ENCODE measurements at regions of chr13 and their contacts with region 1.

Region 1: GRCh38 chr13:113816946-113817859 is 46.7 kb downstream of the GAS6 start:
- DNase-seq: peak; percentile 69 to 90 (median 85)
- ATAC-seq: peak; percentile 91
- H3K4me3 ChIP-seq: no peak overlapping the region
- H3K4me3 Mint-ChIP-seq: peak overlapping the region; percentile 75 to 100 (median 86)
- H3K27ac ChIP-seq: no peak overlapping the region
- H3K27ac Mint-ChIP-seq: peak overlapping the region in 8 of 9 donors; percentile 40 to 95 (median 76)
- H3K4me1 ChIP-seq: peaks cover 10 to 11% of the 10 kb centered on the region in 2 donors
- H3K4me1 Mint-ChIP-seq: peaks cover 13 to 30% (median 23%) of the 10 kb centered on the region in 7 donors
- H3K27me3 ChIP-seq: no peaks in the 10 kb centered on the region
- H3K27me3 Mint-ChIP-seq: peaks cover 0 to 3% (median 0%) of the 10 kb centered on the region in 5 donors

Region 2: DNA sequence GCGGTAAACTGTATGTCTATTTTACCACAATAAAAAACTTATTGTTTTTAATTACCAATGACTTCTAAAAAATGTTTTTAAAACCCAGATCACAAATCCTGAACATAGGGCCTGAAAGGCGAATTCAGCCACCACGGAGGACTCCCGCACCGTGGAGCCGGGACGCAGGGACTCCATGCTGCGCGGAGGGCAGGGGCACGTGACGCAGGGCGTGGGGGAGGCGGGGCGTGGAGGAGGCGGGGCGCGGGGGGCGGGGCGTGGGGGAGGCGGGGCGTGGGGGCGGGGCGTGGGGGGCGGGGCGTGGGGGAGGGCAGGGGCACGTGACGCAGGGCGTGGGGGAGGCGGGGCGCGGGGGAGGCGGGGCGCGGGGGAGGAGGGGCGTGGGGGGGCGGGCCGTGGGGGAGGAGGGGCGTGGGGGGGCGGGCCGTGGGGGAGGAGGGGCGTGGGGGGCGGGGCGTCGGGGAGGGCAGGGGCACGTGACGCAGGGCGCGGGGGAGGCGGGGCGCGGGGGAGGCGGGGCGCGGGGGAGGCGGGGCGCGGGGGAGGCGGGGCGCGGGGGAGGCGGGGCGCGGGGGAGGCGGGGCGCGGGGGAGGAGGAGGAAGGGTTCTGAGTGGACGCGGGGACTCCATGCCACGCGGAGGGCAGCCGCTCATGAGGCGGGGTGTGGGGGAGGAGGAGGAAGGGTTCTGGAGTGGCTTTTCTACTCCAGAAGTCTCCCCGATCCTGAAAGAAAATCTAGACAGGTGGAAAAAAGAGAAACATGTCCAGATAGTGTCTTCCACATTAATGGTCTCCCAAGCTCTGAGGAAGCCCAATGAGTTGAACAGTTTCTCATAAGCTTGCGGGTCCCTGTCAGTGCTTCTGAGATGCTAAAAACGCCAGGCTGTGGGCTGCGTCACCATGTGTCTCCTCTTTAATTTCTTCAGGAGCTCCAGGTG is 663.1 kb before region 1 on chr13:
- CTCF ChIA-PET with region 1: no interaction called
- POLR2A ChIA-PET with region 1: no interaction called
- intact Hi-C with region 1: loop called in 1 of 2 experiments (anchors 5 kb)
- DNase-seq: peak; percentile 55 to 76 (median 70)
- ATAC-seq: peak; percentile 89
- H3K4me3 ChIP-seq: peak overlapping the region; percentile 82
- H3K4me3 Mint-ChIP-seq: peak overlapping the region; percentile 78 to 99 (median 86)
- H3K27ac ChIP-seq: peak overlapping the region; percentile 68
- H3K27ac Mint-ChIP-seq: peak overlapping the region in 8 of 9 donors; percentile 84 to 96 (median 88)
- H3K4me1 ChIP-seq: peaks cover 15 to 16% of the 10 kb centered on the region in 2 donors
- H3K4me1 Mint-ChIP-seq: peaks cover 9 to 26% (median 21%) of the 10 kb centered on the region in 7 donors
- H3K27me3 ChIP-seq: no peaks in the 10 kb centered on the region
- H3K27me3 Mint-ChIP-seq: peaks cover 0 to 27% (median 7%) of the 10 kb centered on the region in 5 donors

Region 3: GRCh38 chr13:113832204-113832603 is 15.0 kb after region 1 on chr13:
- CTCF ChIA-PET with region 1: no interaction called
- POLR2A ChIA-PET with region 1: no interaction called
- intact Hi-C with region 1: no loop called
- DNase-seq: no peak
- ATAC-seq: no peak
- H3K4me3 ChIP-seq: no peak overlapping the region
- H3K4me3 Mint-ChIP-seq: no peak overlapping the region
- H3K27ac ChIP-seq: no peak overlapping the region
- H3K27ac Mint-ChIP-seq: no peak overlapping the region
- H3K4me1 ChIP-seq: no peaks in the 10 kb centered on the region
- H3K4me1 Mint-ChIP-seq: peaks cover 0 to 7% (median 0%) of the 10 kb centered on the region in 7 donors
- H3K27me3 ChIP-seq: no peaks in the 10 kb centered on the region
- H3K27me3 Mint-ChIP-seq: no peaks in the 10 kb centered on the region

Region 4: GRCh38 chr13:113904411-113904810 is 87.2 kb after region 1 on chr13:
- CTCF ChIA-PET with region 1: no interaction called
- POLR2A ChIA-PET with region 1: no interaction called
- intact Hi-C with region 1: loop called (anchors 2 kb)
- DNase-seq: peak in 3 of 9 donors; percentile 12 to 23 (median 20)
- ATAC-seq: no peak
- H3K4me3 ChIP-seq: no peak overlapping the region
- H3K4me3 Mint-ChIP-seq: no peak overlapping the region
- H3K27ac ChIP-seq: no peak overlapping the region
- H3K27ac Mint-ChIP-seq: no peak overlapping the region
- H3K4me1 ChIP-seq: no peaks in the 10 kb centered on the region
- H3K4me1 Mint-ChIP-seq: peaks cover 0 to 15% (median 7%) of the 10 kb centered on the region in 7 donors
- H3K27me3 ChIP-seq: no peaks in the 10 kb centered on the region
- H3K27me3 Mint-ChIP-seq: peaks cover 5 to 28% (median 20%) of the 10 kb centered on the region in 5 donors

Region 5: GRCh38 chr13:113928685-113929627 is 111.8 kb after region 1 on chr13:
- CTCF ChIA-PET with region 1: no interaction called
- POLR2A ChIA-PET with region 1: no interaction called
- intact Hi-C with region 1: no loop called
- DNase-seq: no peak
- ATAC-seq: no peak
- H3K4me3 ChIP-seq: no peak overlapping the region
- H3K4me3 Mint-ChIP-seq: no peak overlapping the region
- H3K27ac ChIP-seq: no peak overlapping the region
- H3K27ac Mint-ChIP-seq: no peak overlapping the region
- H3K4me1 ChIP-seq: peaks cover 0 to 14% of the 10 kb centered on the region in 2 donors
- H3K4me1 Mint-ChIP-seq: peaks cover 0 to 11% (median 0%) of the 10 kb centered on the region in 7 donors
- H3K27me3 ChIP-seq: no peaks in the 10 kb centered on the region
- H3K27me3 Mint-ChIP-seq: peaks cover 0 to 21% (median 0%) of the 10 kb centered on the region in 5 donors

Region 6: DNA sequence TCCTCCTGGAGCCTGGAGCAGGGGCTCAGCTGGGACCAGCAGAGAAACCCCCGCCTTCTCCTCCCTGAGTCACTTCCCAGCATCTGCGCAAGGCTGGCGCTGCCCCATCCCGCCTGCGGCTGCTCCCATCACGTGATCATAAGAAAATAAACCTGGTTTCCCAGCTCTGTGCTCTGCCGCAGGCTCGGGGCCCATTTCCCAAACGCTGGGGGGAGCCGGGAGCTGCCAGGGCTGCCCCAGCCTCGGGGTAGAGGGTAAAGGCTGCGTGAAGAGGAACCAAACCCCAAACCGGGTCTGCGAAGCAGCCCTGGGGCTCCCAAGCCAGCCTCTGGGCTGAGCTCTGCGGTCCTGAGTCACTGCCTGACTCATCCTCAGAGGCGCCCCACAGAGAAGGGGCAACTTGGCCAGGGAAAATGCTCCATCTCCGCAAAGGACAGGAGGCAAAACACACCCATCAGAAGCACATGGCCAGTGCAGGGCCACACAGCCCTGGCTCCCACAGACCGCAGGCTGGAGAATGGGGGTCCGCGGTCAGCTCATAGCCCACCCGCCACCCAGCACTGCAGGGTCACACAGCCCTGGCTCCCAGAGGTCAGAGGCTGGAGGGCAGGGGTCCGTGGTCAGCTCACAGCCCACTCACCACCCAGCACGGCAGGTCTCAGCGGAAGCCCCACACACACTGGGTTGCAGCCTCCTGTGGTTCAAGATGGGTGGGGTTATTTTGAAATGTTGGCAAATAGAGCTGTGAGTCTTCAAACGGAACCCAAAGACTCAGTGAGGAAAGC is 248.1 kb after region 1 on chr13:
- CTCF ChIA-PET with region 1: no interaction called
- POLR2A ChIA-PET with region 1: no interaction called
- intact Hi-C with region 1: loop called in 1 of 2 experiments (anchors 2 kb)
- DNase-seq: peak; percentile 42 to 74 (median 63)
- ATAC-seq: peak; percentile 77
- H3K4me3 ChIP-seq: peak overlapping the region; percentile 66
- H3K4me3 Mint-ChIP-seq: peak overlapping the region; percentile 78 to 89 (median 86)
- H3K27ac ChIP-seq: peak overlapping the region; percentile 76
- H3K27ac Mint-ChIP-seq: peak overlapping the region; percentile 86 to 99 (median 92)
- H3K4me1 ChIP-seq: peaks cover 51 to 60% of the 10 kb centered on the region in 2 donors
- H3K4me1 Mint-ChIP-seq: peaks cover 51 to 72% (median 62%) of the 10 kb centered on the region in 7 donors
- H3K27me3 ChIP-seq: no peaks in the 10 kb centered on the region
- H3K27me3 Mint-ChIP-seq: no peaks in the 10 kb centered on the region

Region 7: DNA sequence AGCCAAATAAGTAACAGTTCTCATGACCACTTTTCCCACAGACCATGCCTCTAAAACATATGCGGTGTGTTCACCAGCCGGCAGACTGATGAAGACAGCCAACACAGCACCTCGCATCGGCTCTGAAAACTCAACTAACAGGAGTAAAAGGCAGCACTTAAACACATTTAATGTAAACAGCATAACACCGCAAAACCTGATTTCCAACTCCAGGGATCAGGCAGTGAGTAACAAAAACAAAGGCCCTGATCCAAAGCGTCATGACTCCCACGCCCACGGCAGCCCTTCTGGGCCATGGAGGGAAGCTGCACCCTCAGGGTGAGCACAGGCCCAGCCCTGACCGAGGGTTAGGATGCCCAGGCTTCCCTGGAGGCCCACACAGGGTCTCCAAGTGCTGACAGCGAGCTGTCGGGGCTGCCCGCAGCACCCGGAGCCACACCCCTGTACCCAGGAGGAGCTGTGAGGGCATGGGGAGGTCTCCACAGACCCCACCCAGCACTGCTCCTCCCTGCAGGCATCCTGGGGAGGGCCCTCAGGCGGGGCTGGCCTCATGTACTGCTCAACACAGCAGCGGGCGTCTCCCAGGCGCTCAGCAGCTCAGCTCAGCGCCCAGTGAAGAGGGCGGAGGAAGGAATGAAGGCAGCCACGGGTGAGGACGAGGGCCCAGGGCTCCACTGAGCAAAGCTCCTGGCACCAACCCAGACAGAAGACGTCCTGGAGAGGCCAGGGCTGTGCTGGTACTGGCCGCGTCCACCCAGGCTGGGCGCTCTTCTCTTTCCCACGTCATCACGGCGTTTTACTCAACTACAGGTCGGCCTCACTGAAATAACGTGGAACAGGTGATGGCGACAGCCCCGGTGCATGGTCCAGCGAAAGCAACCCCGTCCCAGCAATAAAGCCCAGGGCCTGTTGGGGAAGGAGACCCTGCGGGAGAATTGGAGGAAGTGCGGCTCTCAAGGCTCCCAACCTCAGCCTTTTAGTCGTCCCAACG is 261.6 kb after region 1 on chr13:
- CTCF ChIA-PET with region 1: no interaction called
- POLR2A ChIA-PET with region 1: no interaction called
- intact Hi-C with region 1: no loop called
- DNase-seq: peak in 1 of 9 donors; percentile 19
- ATAC-seq: peak; percentile 51
- H3K4me3 ChIP-seq: no peak overlapping the region
- H3K4me3 Mint-ChIP-seq: peak overlapping the region in 8 of 10 donors; percentile 29 to 68 (median 45)
- H3K27ac ChIP-seq: peak overlapping the region; percentile 61
- H3K27ac Mint-ChIP-seq: peak overlapping the region; percentile 9 to 90 (median 76)
- H3K4me1 ChIP-seq: peaks cover 19 to 54% of the 10 kb centered on the region in 2 donors
- H3K4me1 Mint-ChIP-seq: peaks cover 13 to 78% (median 57%) of the 10 kb centered on the region in 7 donors
- H3K27me3 ChIP-seq: no peaks in the 10 kb centered on the region
- H3K27me3 Mint-ChIP-seq: no peaks in the 10 kb centered on the region

Region 8: DNA sequence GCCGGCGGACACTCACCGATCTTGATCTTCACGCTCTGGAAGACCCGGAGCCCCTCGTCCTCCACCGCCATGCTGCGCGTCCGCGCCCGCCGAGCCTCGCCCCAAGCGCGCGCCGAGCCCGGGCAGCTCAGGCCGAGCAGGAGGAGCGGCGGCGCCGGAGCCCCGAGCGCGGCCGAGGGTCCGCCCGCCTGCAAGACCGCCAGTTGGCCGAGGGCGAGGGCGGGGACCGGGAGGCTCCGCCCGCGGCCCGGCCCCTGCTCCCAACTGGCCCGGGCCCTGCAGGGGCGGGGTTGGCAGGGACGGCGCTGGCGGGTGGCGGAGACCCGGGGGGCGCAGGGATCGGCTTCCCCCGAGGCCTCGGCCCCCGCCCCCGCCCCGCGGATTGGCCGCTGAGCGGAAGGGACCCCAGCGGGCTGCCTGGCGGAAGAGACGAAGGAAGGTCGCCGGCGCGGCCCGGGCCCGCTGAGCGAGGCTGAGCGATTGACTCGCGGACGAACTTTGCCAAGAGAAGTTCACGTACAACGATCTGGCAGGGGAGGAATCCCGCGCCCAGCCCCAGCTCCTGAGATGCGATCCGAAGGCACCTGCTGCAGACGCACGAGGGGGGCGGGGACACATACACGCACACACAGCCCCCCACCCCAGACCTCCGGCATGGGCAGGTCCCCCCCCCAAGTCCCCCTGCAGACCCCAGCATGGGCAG is 315.4 kb after region 1 on chr13 and contains the start of gene RASA3:
- CTCF ChIA-PET with region 1: no interaction called
- POLR2A ChIA-PET with region 1: no interaction called
- intact Hi-C with region 1: loop called (anchors 1 to 5 kb)
- DNase-seq: peak in 8 of 9 donors; percentile 52 to 75 (median 58)
- ATAC-seq: peak; percentile 69
- H3K4me3 ChIP-seq: peak within 1 kb of the TSS; percentile 90
- H3K4me3 Mint-ChIP-seq: peak within 1 kb of the TSS; percentile 96 to 100 (median 100)
- H3K27ac ChIP-seq: peak within 1 kb of the TSS; percentile 85
- H3K27ac Mint-ChIP-seq: peak within 1 kb of the TSS; percentile 82 to 100 (median 99)
- H3K4me1 ChIP-seq: peaks cover 32 to 49% of the 10 kb centered on the region in 2 donors
- H3K4me1 Mint-ChIP-seq: peaks cover 36 to 74% (median 56%) of the 10 kb centered on the region in 7 donors
- H3K27me3 ChIP-seq: no peaks in the 10 kb centered on the region
- H3K27me3 Mint-ChIP-seq: peaks cover 0 to 4% (median 0%) of the 10 kb centered on the region in 5 donors
- total RNA-seq, gene RASA3: 110 to 227 (median 199) TPM

Region 9: GRCh38 chr13:114226699-114227323 is 409.6 kb after region 1 on chr13:
- CTCF ChIA-PET with region 1: interaction called, 3 read pairs
- POLR2A ChIA-PET with region 1: no interaction called
- intact Hi-C with region 1: loop called (anchors 1 kb)
- DNase-seq: peak; percentile 67 to 82 (median 73)
- ATAC-seq: peak; percentile 92
- H3K4me3 ChIP-seq: no peak overlapping the region
- H3K4me3 Mint-ChIP-seq: peak overlapping the region; percentile 35 to 74 (median 54)
- H3K27ac ChIP-seq: peak overlapping the region; percentile 47
- H3K27ac Mint-ChIP-seq: peak overlapping the region in 8 of 9 donors; percentile 84 to 95 (median 91)
- H3K4me1 ChIP-seq: peaks cover 17 to 40% of the 10 kb centered on the region in 2 donors
- H3K4me1 Mint-ChIP-seq: peaks cover 37 to 50% (median 43%) of the 10 kb centered on the region in 7 donors
- H3K27me3 ChIP-seq: no peaks in the 10 kb centered on the region
- H3K27me3 Mint-ChIP-seq: peaks cover 0 to 34% (median 4%) of the 10 kb centered on the region in 5 donors